MCF 10A (cell line): ENCODE measurements at regions of chr3 and their contacts with region 1.

Region 1: DNA sequence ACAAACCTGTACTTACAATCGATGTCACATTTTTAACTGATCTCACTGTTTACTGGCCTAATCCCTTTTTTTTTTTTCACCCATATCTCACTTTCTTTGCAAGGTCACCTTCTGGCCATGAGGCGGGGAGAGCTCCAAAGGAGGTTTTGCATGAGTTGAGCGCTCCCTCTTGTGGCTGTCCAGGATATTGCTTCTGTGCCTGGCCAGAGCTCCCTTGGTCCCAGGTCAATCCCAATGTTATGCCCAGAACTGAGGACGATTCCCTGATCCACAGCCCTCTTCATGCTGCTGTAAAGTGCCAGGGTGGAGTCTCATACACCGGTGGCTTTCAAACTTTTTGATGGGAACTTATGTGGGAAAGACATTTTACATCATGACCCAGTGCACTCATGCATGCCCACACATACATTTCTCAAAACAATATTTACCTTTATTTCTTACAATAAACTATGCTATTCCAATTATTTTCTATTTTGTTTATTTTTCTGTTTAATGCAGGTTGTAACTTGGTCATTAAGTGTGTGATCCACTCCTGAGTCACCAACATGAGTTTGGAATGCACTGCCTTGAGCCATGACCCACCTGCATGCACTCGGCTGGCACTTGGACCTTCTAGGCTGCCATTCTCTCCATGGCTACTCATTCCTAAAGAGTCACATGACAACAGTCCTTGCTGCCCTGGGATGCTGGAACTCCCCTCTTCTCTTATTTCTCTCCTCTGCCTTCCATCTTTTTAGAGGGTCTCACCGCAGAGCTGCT is 9.6 kb upstream of the SST start:
- DNase-seq: peak; percentile 78
- H3K4me3 Mint-ChIP-seq: no peak overlapping the region
- H3K27ac Mint-ChIP-seq: no peak overlapping the region
- H3K4me1 Mint-ChIP-seq: no peaks in the 10 kb centered on the region
- H3K27me3 Mint-ChIP-seq: peaks cover 69% of the 10 kb centered on the region
- CTCF ChIP-seq: peak; percentile 84

Region 2: GRCh38 chr3:187197057-187197649 is 482.7 kb before region 1 on chr3 and contains the start of gene RTP1:
- CTCF ChIA-PET with region 1: interaction called, 14 read pairs
- POLR2A ChIA-PET with region 1: no interaction called
- intact Hi-C with region 1: no loop called
- DNase-seq: no peak
- H3K4me3 Mint-ChIP-seq: no peak within 1 kb of the TSS
- H3K27ac Mint-ChIP-seq: no peak within 1 kb of the TSS
- H3K4me1 Mint-ChIP-seq: peaks cover 10% of the 10 kb centered on the region
- H3K27me3 Mint-ChIP-seq: no peaks in the 10 kb centered on the region
- CTCF ChIP-seq: no peak
- total RNA-seq, gene RTP1: not detected in 2 replicates

Region 3: GRCh38 chr3:187295316-187296034 is 384.3 kb before region 1 on chr3:
- CTCF ChIA-PET with region 1: interaction called, 10 read pairs
- POLR2A ChIA-PET with region 1: no interaction called
- intact Hi-C with region 1: no loop called
- DNase-seq: peak; percentile 31
- H3K4me3 Mint-ChIP-seq: no peak overlapping the region
- H3K27ac Mint-ChIP-seq: no peak overlapping the region
- H3K4me1 Mint-ChIP-seq: no peaks in the 10 kb centered on the region
- H3K27me3 Mint-ChIP-seq: peaks cover 30% of the 10 kb centered on the region
- CTCF ChIP-seq: no peak

Region 4: GRCh38 chr3:187616307-187616972 is 63.4 kb before region 1 on chr3:
- CTCF ChIA-PET with region 1: interaction called, 125 read pairs
- POLR2A ChIA-PET with region 1: interaction called, 14 read pairs
- intact Hi-C with region 1: loop called (anchors 1 kb)
- DNase-seq: peak; percentile 76
- H3K4me3 Mint-ChIP-seq: no peak overlapping the region
- H3K27ac Mint-ChIP-seq: no peak overlapping the region
- H3K4me1 Mint-ChIP-seq: peaks cover 5% of the 10 kb centered on the region
- H3K27me3 Mint-ChIP-seq: peaks cover 36% of the 10 kb centered on the region
- CTCF ChIP-seq: peak; percentile 78

Region 5: DNA sequence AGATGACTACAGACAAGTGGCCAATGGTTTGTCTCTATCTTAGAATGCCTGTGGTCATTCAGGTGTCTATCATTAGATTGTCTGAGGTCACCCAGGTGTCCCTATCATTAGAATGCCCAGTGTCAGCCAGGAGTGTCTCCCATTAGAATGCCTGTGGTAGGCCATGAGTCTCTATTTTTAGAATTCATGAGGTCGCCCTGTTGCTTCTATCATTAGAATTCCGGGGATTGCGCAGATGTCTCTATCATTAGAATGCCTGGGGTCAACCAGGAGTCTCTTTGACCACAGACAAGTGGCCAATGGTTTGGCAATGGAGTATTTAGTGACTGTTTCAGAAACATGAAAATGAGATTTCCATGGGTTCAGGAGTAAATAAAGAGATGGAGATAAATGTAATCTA is 15.0 kb after region 1 on chr3:
- CTCF ChIA-PET with region 1: interaction called, 38 read pairs
- POLR2A ChIA-PET with region 1: no interaction called
- intact Hi-C with region 1: no loop called
- DNase-seq: no peak
- H3K4me3 Mint-ChIP-seq: no peak overlapping the region
- H3K27ac Mint-ChIP-seq: no peak overlapping the region
- H3K4me1 Mint-ChIP-seq: no peaks in the 10 kb centered on the region
- H3K27me3 Mint-ChIP-seq: peaks cover 59% of the 10 kb centered on the region
- CTCF ChIP-seq: no peak